ENCODE measurements at regions of chr1 and their contacts with region 1.

Region 1: DNA sequence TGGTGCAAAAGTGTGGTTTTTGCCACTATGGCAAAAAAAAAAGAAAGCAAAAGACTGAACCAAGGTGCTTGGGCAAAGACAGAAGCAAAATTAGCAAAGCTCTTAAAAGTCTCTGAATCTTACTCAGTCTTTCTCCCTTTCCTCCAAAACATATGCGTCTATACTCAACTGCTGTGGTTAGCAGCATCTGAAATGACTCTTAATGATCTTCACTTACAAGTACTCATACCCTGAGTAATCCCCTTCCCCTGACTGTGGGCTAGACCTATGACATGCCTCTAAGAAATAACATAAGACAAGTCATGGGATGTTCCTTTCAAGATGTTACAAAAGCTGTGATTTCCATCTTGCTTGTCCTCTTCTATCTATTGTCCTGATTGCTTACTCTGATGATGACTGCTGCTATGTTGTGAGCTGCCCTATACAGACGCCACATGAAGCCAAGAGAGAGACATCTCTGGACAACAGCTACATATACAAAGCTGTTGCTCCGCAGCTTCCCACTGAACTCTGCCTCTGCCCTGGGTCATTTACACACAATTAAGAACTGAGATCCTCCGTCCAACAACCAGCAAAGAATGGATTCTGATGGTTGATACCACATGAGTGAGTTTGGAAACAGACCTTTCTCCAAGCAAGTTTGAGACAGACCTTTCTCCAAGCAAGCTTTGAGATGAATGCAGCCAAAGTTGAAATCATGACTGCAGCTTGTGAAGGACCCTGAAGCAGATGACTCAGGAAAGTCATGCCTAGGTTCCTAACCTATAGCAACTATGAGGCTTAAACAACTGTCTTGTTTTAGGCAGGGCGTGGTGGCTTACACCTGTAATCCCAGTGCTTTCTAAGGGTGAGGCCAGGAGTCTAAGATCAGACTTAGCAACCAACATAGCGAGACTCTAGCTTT is 55.2 kb downstream of the PUM1 start:
- DNase-seq: no peak
- ATAC-seq: no peak
- H3K4me3 ChIP-seq: no peak overlapping the region
- H3K4me3 Mint-ChIP-seq: no peak overlapping the region
- H3K27ac ChIP-seq: peak overlapping the region in 1 of 2 donors; percentile 20
- H3K27ac Mint-ChIP-seq: no peak overlapping the region
- H3K4me1 ChIP-seq: peaks cover 31 to 44% of the 10 kb centered on the region in 2 donors
- H3K4me1 Mint-ChIP-seq: peaks cover 59% of the 10 kb centered on the region
- H3K27me3 ChIP-seq: no peaks in the 10 kb centered on the region
- H3K27me3 Mint-ChIP-seq: no peaks in the 10 kb centered on the region
- CTCF ChIP-seq: no peak

Region 2: DNA sequence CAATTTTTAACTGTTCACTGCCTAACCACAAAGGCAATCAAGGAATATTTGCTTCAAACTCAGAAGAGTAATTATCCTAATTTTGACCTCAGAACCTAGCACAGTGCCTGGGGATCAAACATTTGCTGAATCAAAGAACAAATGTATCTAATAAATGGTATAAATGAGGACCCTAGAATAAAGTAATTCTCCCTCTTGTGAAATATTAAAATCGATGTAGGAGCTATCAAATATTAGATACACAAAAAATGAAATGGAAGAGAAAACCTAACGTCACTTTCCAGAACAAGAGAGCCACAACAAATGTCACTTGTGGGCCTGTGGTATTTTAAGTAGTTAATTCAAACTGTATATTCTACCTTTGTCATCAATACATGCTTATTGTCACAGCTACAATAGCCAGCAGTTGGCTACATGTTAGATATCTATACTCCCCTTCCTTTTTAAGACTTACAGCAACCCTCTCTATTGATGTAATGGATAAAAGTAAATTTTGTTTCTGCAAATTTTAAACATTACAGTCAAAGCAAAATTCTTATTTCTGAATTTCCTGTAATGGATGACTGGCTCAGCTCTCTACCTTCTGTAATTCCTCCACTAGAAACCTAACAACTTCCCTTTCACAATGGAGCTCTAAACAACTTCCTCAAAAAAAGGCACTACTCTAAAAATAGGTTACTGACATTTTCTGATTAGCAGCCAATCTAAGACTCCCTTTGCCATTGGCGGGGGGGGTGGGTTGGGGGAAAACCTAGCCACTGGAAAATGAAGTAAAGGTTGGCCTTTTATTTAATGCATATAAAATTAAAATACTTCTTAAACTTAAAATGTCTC is 17.6 kb after region 1 on chr1:
- CTCF ChIA-PET with region 1: interaction called, 5 read pairs
- POLR2A ChIA-PET with region 1: interaction called, 3 read pairs
- intact Hi-C with region 1: loop called (anchors 2 kb)
- DNase-seq: peak; percentile 67
- ATAC-seq: peak; percentile 74
- H3K4me3 ChIP-seq: peak overlapping the region in 1 of 5 experiments; percentile 33
- H3K4me3 Mint-ChIP-seq: peak overlapping the region; percentile 40
- H3K27ac ChIP-seq: peak overlapping the region; percentile 13 to 55
- H3K27ac Mint-ChIP-seq: peak overlapping the region; percentile 1
- H3K4me1 ChIP-seq: peaks cover 44 to 45% of the 10 kb centered on the region in 2 donors
- H3K4me1 Mint-ChIP-seq: peaks cover 69% of the 10 kb centered on the region
- H3K27me3 ChIP-seq: no peaks in the 10 kb centered on the region
- H3K27me3 Mint-ChIP-seq: no peaks in the 10 kb centered on the region
- CTCF ChIP-seq: no peak

Region 3: DNA sequence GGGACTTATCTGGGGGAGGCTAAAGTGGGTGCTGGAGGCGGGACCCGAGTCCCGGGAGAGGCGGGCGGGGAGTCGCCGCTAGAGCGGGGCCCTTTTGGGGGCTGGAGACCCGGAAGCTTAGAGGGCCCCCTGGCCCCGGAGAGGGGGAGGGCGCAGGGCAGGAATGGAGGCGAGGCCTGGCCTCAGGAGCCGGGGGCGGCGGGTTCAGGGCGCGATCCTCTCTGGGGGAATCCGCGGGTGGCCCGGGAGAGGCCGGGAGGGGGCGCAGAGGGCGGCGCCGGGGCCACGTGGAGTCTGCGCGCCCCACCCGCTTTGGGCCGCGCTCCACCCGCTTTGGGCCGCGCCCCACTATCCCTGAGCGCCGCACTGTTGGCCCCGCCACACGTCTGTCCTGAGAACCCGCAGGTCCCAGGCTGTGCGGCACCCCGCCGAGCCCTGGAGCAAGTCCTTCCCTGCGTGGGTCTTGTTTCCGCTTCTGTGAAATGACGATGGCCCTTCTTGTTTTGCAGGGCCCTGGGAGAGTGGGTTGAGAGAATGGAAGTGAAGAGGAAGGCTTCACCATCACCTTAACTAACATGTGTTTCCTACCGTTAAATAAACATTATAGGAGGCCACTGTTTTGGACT is 145.0 kb after region 1 on chr1:
- CTCF ChIA-PET with region 1: no interaction called
- POLR2A ChIA-PET with region 1: interaction called, 10 read pairs
- intact Hi-C with region 1: no loop called
- DNase-seq: peak; percentile 75
- ATAC-seq: peak; percentile 80
- H3K4me3 ChIP-seq: peak overlapping the region; percentile 53 to 76 (median 67)
- H3K4me3 Mint-ChIP-seq: peak overlapping the region; percentile 90
- H3K27ac ChIP-seq: peak overlapping the region in 1 of 2 donors; percentile 39
- H3K27ac Mint-ChIP-seq: peak overlapping the region; percentile 80
- H3K4me1 ChIP-seq: peaks cover 5 to 14% of the 10 kb centered on the region in 2 donors
- H3K4me1 Mint-ChIP-seq: peaks cover 9% of the 10 kb centered on the region
- H3K27me3 ChIP-seq: no peaks in the 10 kb centered on the region
- H3K27me3 Mint-ChIP-seq: no peaks in the 10 kb centered on the region
- CTCF ChIP-seq: peak; percentile 55